T-cell (primary cell): ENCODE measurements at regions of chr11 and their contacts with region 1.

Region 1: DNA sequence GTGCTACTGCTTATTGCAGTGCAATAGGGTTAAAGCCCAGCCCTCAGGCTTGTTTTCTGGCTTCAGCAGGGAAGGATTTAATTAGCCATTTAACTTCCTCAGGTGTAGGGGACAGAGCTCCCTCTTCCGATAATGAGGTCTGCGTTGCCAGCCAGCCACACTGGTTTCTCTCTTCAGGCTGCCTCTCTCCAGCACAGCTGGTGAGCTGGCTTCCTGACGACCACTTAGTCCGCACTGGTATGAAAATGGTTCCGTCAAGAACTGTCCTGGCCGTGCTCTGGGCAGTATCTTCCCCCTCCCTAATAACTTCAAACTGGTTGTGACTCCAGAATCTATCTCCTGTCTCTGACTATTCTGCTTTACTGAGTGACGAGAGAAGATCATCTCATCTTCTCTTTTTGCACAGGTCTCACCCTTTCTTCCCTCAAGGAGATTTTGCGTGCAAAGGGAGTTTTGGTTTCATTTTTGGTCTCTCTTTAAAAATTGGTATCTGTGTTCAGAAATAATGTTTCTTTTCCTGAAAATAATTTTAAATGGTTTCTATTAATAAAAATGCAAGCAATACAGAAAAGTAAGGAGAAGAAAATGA is 49.2 kb downstream of the CNTN5 start:
- DNase-seq: no peak
- ATAC-seq: no peak
- H3K4me3 ChIP-seq: no peak overlapping the region
- H3K4me3 Mint-ChIP-seq: peak overlapping the region; percentile 25 to 51 (median 49)
- H3K27ac ChIP-seq: no peak overlapping the region
- H3K27ac Mint-ChIP-seq: no peak overlapping the region
- H3K4me1 ChIP-seq: no peaks in the 10 kb centered on the region
- H3K4me1 Mint-ChIP-seq: peaks cover 0 to 6% (median 4%) of the 10 kb centered on the region in 3 donors
- H3K27me3 ChIP-seq: no peaks in the 10 kb centered on the region
- H3K27me3 Mint-ChIP-seq: no peaks in the 10 kb centered on the region

Region 2: GRCh38 chr11:99015634-99016454 is 54.1 kb before region 1 on chr11:
- CTCF ChIA-PET with region 1: interaction called in 1 of 2 experiments, 10 read pairs
- POLR2A ChIA-PET with region 1: no interaction called
- DNase-seq: peak in 1 of 35 experiments; percentile 50
- ATAC-seq: no peak
- H3K4me3 ChIP-seq: no peak overlapping the region
- H3K4me3 Mint-ChIP-seq: no peak overlapping the region
- H3K27ac ChIP-seq: no peak overlapping the region
- H3K27ac Mint-ChIP-seq: no peak overlapping the region
- H3K4me1 ChIP-seq: peaks cover 0 to 3% of the 10 kb centered on the region in 2 experiments
- H3K4me1 Mint-ChIP-seq: peaks cover 6 to 10% (median 7%) of the 10 kb centered on the region in 3 donors
- H3K27me3 ChIP-seq: peaks cover 2 to 7% of the 10 kb centered on the region in 2 experiments
- H3K27me3 Mint-ChIP-seq: peaks cover 19% of the 10 kb centered on the region in 2 donors

Region 3: GRCh38 chr11:99773646-99774045 is 703.7 kb after region 1 on chr11:
- CTCF ChIA-PET with region 1: no interaction called
- POLR2A ChIA-PET with region 1: no interaction called
- DNase-seq: no peak
- ATAC-seq: no peak
- H3K4me3 ChIP-seq: no peak overlapping the region
- H3K4me3 Mint-ChIP-seq: no peak overlapping the region
- H3K27ac ChIP-seq: no peak overlapping the region
- H3K27ac Mint-ChIP-seq: no peak overlapping the region
- H3K4me1 ChIP-seq: no peaks in the 10 kb centered on the region
- H3K4me1 Mint-ChIP-seq: no peaks in the 10 kb centered on the region
- H3K27me3 ChIP-seq: no peaks in the 10 kb centered on the region
- H3K27me3 Mint-ChIP-seq: no peaks in the 10 kb centered on the region